ENCODE measurements at regions of chr4 and their contacts with region 1.

Region 1: GRCh38 chr4:151117371-151117962 is 18.0 kb downstream of the RPS3A start:
- DNase-seq: peak in 1 of 2 donors; percentile 30
- H3K4me3 ChIP-seq: no peak overlapping the region
- H3K27ac ChIP-seq: no peak overlapping the region
- H3K4me1 ChIP-seq: no peaks in the 10 kb centered on the region
- H3K27me3 ChIP-seq: no peaks in the 10 kb centered on the region
- CTCF ChIP-seq: peak in 2 of 3 donors; percentile 50 to 71
- POLR2A ChIP-seq: no peak

Region 2: GRCh38 chr4:150699599-150699998 is 417.9 kb before region 1 on chr4:
- intact Hi-C with region 1: no loop called
- DNase-seq: no peak
- H3K4me3 ChIP-seq: no peak overlapping the region
- H3K27ac ChIP-seq: no peak overlapping the region
- H3K4me1 ChIP-seq: no peaks in the 10 kb centered on the region
- H3K27me3 ChIP-seq: no peaks in the 10 kb centered on the region
- CTCF ChIP-seq: no peak
- POLR2A ChIP-seq: no peak

Region 3: GRCh38 chr4:151184523-151185458 is 67.3 kb after region 1 on chr4:
- intact Hi-C with region 1: loop called (anchors 5 kb)
- DNase-seq: no peak
- H3K4me3 ChIP-seq: no peak overlapping the region
- H3K27ac ChIP-seq: no peak overlapping the region
- H3K4me1 ChIP-seq: no peaks in the 10 kb centered on the region
- H3K27me3 ChIP-seq: no peaks in the 10 kb centered on the region
- CTCF ChIP-seq: no peak
- POLR2A ChIP-seq: no peak

Region 4: DNA sequence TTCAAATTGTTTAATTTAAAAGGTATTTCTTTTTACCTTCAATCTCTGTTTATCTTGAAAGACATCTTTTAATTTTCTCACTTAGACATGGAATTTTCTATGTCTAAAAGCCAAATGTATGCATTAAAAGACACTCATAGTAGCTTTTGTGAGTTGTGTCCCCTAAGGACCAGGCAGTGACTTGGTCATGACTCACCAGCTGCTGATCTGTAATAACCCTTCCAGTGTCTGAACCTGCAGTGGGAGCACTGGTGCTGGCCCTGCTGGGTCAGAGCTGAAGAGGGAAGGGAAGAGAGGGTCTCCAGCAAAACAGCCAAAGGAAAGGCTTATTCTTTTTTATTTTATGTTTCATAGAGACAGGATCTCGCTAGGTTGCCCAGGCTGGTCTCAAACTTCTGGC is 239.0 kb after region 1 on chr4:
- intact Hi-C with region 1: loop called (anchors 5 kb)
- DNase-seq: no peak
- H3K4me3 ChIP-seq: no peak overlapping the region
- H3K27ac ChIP-seq: no peak overlapping the region
- H3K4me1 ChIP-seq: no peaks in the 10 kb centered on the region
- H3K27me3 ChIP-seq: no peaks in the 10 kb centered on the region
- CTCF ChIP-seq: no peak
- POLR2A ChIP-seq: no peak